CD14-positive monocyte (primary cell): ENCODE measurements at regions of chr15 and their contacts with region 1.

Region 1: GRCh38 chr15:24683736-24684135 is 8.2 kb downstream of the NPAP1 start:
- DNase-seq: no peak
- H3K4me3 ChIP-seq: no peak overlapping the region
- H3K4me3 Mint-ChIP-seq: no peak overlapping the region
- H3K27ac ChIP-seq: no peak overlapping the region
- H3K27ac Mint-ChIP-seq: no peak overlapping the region
- H3K4me1 ChIP-seq: no peaks in the 10 kb centered on the region
- H3K4me1 Mint-ChIP-seq: no peaks in the 10 kb centered on the region
- H3K27me3 ChIP-seq: no peaks in the 10 kb centered on the region
- H3K27me3 Mint-ChIP-seq: no peaks in the 10 kb centered on the region
- CTCF ChIP-seq: no peak

Region 2: DNA sequence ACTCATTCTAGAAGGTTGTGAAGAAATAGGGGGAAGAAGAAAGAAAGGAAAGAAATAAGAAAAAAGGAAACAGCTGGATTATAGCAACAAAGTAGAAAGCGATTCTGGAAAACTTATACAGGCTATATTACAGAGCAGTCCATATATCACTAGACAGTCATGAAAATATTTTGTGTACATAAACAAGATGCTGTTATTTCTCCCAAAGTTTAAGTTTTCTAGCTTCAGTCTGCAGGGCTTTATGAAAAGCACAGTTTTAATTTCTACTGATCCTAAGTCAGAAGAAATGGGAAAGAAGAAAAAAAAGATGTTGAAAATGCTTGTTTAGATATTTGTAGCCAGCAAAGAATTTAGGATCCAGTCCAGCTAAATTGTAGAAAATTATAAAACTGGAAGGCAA is 675.3 kb before region 1 on chr15:
- intact Hi-C with region 1: loop called in 1 of 2 experiments (anchors 10 kb)
- DNase-seq: no peak
- H3K4me3 ChIP-seq: no peak overlapping the region
- H3K4me3 Mint-ChIP-seq: no peak overlapping the region
- H3K27ac ChIP-seq: no peak overlapping the region
- H3K27ac Mint-ChIP-seq: no peak overlapping the region
- H3K4me1 ChIP-seq: no peaks in the 10 kb centered on the region
- H3K4me1 Mint-ChIP-seq: no peaks in the 10 kb centered on the region
- H3K27me3 ChIP-seq: no peaks in the 10 kb centered on the region
- H3K27me3 Mint-ChIP-seq: no peaks in the 10 kb centered on the region
- CTCF ChIP-seq: no peak

Region 3: DNA sequence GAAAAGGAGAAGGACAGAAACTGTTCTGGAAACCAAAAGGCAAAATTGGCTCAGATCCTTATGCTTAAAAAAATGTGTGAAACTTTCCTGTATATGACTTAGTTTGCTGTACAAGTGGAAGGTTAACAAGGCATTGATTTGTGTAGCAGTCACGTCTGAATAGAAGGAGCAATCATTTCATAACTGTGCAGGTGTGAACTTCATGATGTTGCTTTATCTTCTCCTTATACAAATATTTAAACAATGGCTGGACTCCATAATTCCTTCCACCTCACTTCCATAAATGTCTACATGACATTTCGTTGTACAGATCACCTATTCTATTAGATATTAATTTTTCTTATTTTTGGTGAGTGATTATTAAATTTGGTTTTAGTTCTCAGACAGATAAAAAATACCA is 390.9 kb before region 1 on chr15:
- intact Hi-C with region 1: no loop called
- DNase-seq: no peak
- H3K4me3 ChIP-seq: no peak overlapping the region
- H3K4me3 Mint-ChIP-seq: no peak overlapping the region
- H3K27ac ChIP-seq: no peak overlapping the region
- H3K27ac Mint-ChIP-seq: no peak overlapping the region
- H3K4me1 ChIP-seq: no peaks in the 10 kb centered on the region
- H3K4me1 Mint-ChIP-seq: no peaks in the 10 kb centered on the region
- H3K27me3 ChIP-seq: no peaks in the 10 kb centered on the region
- H3K27me3 Mint-ChIP-seq: no peaks in the 10 kb centered on the region
- CTCF ChIP-seq: no peak